Activated CD4-positive, alpha-beta T cell treated with anti-CD3 and anti-CD28 coated beads for 36 hours (primary cell): ENCODE measurements at regions of chrX and their contacts with region 1.

Region 1: GRCh38 chrX:15973299-15973698 is 118.7 kb upstream of the AP1S2 start:
- DNase-seq: peak; percentile 34
- ATAC-seq: peak; percentile 69
- H3K4me3 Mint-ChIP-seq: no peak overlapping the region
- H3K27ac Mint-ChIP-seq: no peak overlapping the region
- H3K4me1 Mint-ChIP-seq: peaks cover 6% of the 10 kb centered on the region
- H3K27me3 Mint-ChIP-seq: no peaks in the 10 kb centered on the region

Region 2: DNA sequence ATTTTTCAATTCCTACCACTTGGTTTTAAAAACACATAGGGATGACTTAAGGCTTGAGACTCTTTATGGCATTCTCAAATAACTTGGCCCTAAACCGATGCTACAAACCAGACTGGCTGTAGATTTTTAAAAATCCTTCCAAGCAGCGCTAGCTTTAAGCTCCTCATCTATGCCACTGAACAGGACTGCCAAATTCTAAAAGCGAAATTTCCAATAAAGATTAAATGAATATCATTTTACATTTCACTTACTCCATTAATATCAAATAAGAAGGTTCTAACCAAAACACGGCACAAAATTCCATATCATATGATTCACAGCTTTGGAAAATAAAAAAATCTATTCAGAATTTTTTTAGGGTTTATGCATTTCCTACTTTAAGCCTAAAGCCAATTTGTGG is 1234.7 kb before region 1 on chrX:
- CTCF ChIA-PET with region 1: no interaction called
- POLR2A ChIA-PET with region 1: no interaction called
- intact Hi-C with region 1: no loop called
- DNase-seq: no peak
- ATAC-seq: no peak
- H3K4me3 Mint-ChIP-seq: no peak overlapping the region
- H3K27ac Mint-ChIP-seq: no peak overlapping the region
- H3K4me1 Mint-ChIP-seq: no peaks in the 10 kb centered on the region
- H3K27me3 Mint-ChIP-seq: no peaks in the 10 kb centered on the region

Region 3: GRCh38 chrX:15686818-15687685 is 286.2 kb before region 1 on chrX:
- CTCF ChIA-PET with region 1: no interaction called
- POLR2A ChIA-PET with region 1: no interaction called
- intact Hi-C with region 1: loop called in 1 of 2 experiments (anchors 1 kb)
- DNase-seq: peak; percentile 66
- ATAC-seq: peak; percentile 79
- H3K4me3 Mint-ChIP-seq: no peak overlapping the region
- H3K27ac Mint-ChIP-seq: no peak overlapping the region
- H3K4me1 Mint-ChIP-seq: peaks cover 12% of the 10 kb centered on the region
- H3K27me3 Mint-ChIP-seq: no peaks in the 10 kb centered on the region

Region 4: DNA sequence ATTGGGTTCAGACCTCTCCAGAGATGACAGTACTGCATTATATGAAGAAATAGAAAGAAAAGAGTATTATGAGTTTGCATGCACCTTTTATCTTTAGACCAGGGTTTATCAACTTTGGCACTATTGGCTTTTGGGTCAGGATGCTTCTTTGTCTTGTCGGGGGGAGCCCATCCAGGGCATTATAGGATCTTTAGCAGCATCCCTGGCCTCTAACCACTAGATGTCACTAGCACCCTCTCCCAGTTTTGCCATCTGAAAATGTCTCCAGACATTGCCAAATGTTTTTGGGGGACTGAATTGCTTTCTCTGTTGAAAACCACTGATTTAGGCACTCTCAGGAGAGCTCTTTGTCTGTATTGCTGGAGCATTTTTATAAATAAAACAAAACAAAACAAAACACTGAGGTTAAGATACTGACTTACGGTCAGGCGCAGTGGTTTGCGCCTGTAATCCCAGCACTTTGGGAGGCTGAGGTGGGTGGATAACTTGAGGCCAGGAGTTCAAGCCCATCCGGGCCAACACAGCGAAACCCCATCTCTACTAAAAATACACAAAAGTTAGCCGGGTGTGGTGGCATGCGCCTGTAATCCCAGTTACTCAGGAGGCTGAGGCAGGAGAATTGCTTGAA is 211.6 kb before region 1 on chrX:
- CTCF ChIA-PET with region 1: no interaction called
- POLR2A ChIA-PET with region 1: no interaction called
- intact Hi-C with region 1: loop called in 1 of 2 experiments (anchors 2 kb)
- DNase-seq: peak; percentile 49
- ATAC-seq: peak; percentile 80
- H3K4me3 Mint-ChIP-seq: no peak overlapping the region
- H3K27ac Mint-ChIP-seq: peak overlapping the region; percentile 70
- H3K4me1 Mint-ChIP-seq: peaks cover 38% of the 10 kb centered on the region
- H3K27me3 Mint-ChIP-seq: no peaks in the 10 kb centered on the region

Region 5: DNA sequence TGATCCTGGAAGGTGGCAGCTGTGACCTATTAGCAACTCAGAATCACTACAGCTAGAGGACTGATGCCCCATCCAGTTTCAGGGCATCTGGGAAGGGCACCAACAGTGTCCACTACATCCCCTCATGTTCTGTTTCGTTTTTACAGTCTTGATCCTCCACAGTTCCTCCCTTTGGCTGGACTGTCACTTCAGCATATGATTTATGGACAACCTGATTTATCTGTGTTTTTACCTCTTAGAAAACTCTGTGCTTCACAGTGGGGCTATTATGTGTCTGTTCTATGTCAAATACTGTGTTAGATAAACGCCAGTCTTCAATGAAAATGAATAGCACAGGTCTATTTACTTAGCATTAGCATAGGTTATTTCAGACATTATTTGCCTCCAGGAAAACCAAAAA is 87.0 kb after region 1 on chrX:
- CTCF ChIA-PET with region 1: no interaction called
- POLR2A ChIA-PET with region 1: no interaction called
- intact Hi-C with region 1: no loop called
- DNase-seq: no peak
- ATAC-seq: no peak
- H3K4me3 Mint-ChIP-seq: no peak overlapping the region
- H3K27ac Mint-ChIP-seq: no peak overlapping the region
- H3K4me1 Mint-ChIP-seq: no peaks in the 10 kb centered on the region
- H3K27me3 Mint-ChIP-seq: peaks cover 5% of the 10 kb centered on the region